WTC11 (cell line): ENCODE measurements at regions of chr10 and their contacts with region 1.

Region 1: DNA sequence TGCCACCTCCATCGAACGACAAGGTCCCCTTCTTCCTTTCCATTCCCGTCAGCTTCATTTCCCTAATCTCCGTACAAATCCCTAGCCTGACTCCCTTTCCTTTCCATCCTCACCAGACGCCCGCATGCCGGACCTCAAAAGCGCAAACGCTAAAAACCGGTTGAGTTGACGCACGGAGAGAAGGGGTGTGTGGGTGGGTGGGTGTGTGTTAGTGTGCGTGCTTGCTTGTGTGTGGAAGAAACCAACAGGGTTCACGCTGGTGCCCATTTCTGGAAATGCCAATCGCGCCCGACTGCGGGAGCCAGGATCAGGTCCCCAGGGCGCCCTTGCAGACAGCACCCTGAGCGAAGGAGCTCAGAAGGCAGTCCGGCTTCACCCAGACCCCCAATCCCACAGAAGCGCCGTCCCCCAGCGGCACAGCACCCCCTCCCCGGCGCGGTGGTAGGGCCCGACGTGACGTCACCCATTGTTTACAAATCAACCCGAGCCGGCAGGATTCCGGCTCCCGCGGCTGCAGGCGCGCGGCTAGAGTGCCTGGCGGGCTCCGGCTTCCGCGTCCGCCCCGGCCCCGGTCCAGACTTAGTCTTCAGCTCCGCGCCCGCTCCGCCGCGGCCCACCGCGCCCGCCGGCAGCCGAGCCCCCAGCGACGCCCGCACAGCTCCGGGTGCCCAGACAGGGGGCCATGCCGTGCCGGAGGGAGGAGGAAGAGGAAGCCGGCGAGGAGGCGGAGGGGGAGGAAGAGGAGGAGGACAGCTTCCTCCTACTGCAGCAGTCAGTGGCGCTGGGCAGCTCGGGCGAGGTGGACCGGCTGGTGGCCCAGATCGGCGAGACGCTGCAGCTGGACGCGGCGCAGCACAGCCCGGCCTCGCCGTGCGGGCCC is at the start of gene FRAT1:
- DNase-seq: peak; percentile 92
- ATAC-seq: peak; percentile 50
- H3K4me3 Mint-ChIP-seq: peak within 1 kb of the TSS; percentile 83
- H3K27ac Mint-ChIP-seq: peak within 1 kb of the TSS; percentile 98
- H3K4me1 Mint-ChIP-seq: peaks cover 29% of the 10 kb centered on the region
- H3K27me3 Mint-ChIP-seq: peaks cover 33% of the 10 kb centered on the region
- CTCF ChIP-seq: no peak
- total RNA-seq, gene FRAT1: 7.0 to 8.2 TPM (median 7.6 TPM) in 3 replicates

Region 2: GRCh38 chr10:97270523-97271154 is 48.4 kb before region 1 on chr10:
- CTCF ChIA-PET with region 1: no interaction called
- POLR2A ChIA-PET with region 1: no interaction called
- DNase-seq: no peak
- ATAC-seq: peak; percentile 32; the same call in 1 of the 2 replicates
- H3K4me3 Mint-ChIP-seq: no peak overlapping the region
- H3K27ac Mint-ChIP-seq: peak overlapping the region; percentile 65; the same call in 1 of the 2 replicates
- H3K4me1 Mint-ChIP-seq: peaks cover 27% of the 10 kb centered on the region
- H3K27me3 Mint-ChIP-seq: no peaks in the 10 kb centered on the region
- CTCF ChIP-seq: no peak

Region 3: GRCh38 chr10:97298223-97298571 is 20.8 kb before region 1 on chr10:
- CTCF ChIA-PET with region 1: no interaction called
- POLR2A ChIA-PET with region 1: no interaction called
- DNase-seq: no peak
- ATAC-seq: no peak
- H3K4me3 Mint-ChIP-seq: no peak overlapping the region
- H3K27ac Mint-ChIP-seq: peak overlapping the region; percentile 10; the same call in 1 of the 2 replicates
- H3K4me1 Mint-ChIP-seq: no peaks in the 10 kb centered on the region
- H3K27me3 Mint-ChIP-seq: peaks cover 2% of the 10 kb centered on the region
- CTCF ChIP-seq: no peak

Region 4: DNA sequence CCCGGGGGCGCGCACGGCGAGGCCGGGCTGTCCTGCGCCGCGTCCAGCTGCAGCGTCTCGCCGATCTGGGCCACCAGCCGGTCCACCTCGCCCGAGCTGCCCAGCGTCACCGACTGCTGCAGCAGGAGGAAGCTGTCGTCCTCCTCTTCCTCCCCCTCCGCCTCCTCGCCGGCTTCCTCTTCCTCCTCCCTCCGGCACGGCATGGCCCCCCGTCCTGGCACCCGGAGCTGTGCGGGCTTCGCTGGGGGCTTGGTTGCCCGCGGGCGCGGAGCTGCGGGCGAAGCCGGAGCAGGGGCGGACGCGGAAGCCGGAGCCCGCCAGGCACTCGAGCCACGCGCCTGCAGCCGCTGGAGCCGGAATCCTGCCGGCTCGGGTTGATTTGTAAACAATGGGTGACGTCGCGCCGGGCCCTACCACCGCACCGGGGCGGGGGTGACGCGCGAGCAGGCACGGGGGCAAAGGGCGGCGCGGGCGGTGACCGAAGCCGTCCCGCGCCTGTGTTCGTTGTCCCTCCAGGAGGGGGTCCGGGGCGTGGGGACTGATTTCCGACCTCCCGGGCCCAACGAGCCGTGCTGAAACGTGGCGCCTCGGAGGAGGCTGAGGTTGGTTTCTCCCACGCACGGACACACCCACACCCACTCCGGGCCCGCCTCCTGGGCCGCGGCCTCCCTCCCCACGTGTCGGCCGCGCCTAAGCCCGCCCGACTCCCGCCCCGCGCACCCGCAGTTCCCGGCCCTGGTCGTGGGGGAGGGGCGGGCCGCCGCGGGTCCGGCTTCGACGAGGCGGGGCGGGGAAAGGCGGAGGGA is 15.6 kb after region 1 on chr10 and contains the start of gene FRAT2:
- CTCF ChIA-PET with region 1: interaction called, 26 read pairs
- POLR2A ChIA-PET with region 1: interaction called, 46 read pairs
- DNase-seq: peak; percentile 93
- ATAC-seq: peak; percentile 17
- H3K4me3 Mint-ChIP-seq: peak within 1 kb of the TSS; percentile 86
- H3K27ac Mint-ChIP-seq: peak within 1 kb of the TSS; percentile 97
- H3K4me1 Mint-ChIP-seq: peaks cover 62% of the 10 kb centered on the region
- H3K27me3 Mint-ChIP-seq: no peaks in the 10 kb centered on the region
- CTCF ChIP-seq: no peak
- total RNA-seq, gene FRAT2: 48.2 to 53.5 TPM (median 50.8 TPM) in 3 replicates

Region 5: DNA sequence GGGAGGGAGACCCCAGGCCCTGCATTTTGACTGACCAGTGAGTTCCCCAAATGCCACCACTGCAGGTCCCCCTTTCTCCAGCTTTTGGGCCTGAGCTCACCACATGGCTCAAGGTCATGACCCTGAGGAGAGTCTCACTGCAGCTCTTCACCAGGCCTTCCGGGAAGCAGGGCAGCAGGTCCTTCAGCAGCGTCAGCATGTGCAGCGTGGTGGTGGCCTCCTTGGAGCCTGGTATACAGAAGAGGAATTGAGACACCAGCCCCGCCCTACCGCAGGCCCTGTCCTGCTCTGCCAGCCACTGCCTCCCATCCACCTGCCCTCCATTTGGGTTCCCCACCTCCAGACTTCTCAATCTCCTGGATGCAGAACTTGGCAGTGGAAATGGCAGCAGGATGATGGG is 69.1 kb after region 1 on chr10:
- CTCF ChIA-PET with region 1: no interaction called
- POLR2A ChIA-PET with region 1: no interaction called
- DNase-seq: no peak
- ATAC-seq: no peak
- H3K4me3 Mint-ChIP-seq: no peak overlapping the region
- H3K27ac Mint-ChIP-seq: no peak overlapping the region
- H3K4me1 Mint-ChIP-seq: no peaks in the 10 kb centered on the region
- H3K27me3 Mint-ChIP-seq: no peaks in the 10 kb centered on the region
- CTCF ChIP-seq: no peak